ENCODE measurements at regions of chrX and their contacts with region 1.

Region 1: DNA sequence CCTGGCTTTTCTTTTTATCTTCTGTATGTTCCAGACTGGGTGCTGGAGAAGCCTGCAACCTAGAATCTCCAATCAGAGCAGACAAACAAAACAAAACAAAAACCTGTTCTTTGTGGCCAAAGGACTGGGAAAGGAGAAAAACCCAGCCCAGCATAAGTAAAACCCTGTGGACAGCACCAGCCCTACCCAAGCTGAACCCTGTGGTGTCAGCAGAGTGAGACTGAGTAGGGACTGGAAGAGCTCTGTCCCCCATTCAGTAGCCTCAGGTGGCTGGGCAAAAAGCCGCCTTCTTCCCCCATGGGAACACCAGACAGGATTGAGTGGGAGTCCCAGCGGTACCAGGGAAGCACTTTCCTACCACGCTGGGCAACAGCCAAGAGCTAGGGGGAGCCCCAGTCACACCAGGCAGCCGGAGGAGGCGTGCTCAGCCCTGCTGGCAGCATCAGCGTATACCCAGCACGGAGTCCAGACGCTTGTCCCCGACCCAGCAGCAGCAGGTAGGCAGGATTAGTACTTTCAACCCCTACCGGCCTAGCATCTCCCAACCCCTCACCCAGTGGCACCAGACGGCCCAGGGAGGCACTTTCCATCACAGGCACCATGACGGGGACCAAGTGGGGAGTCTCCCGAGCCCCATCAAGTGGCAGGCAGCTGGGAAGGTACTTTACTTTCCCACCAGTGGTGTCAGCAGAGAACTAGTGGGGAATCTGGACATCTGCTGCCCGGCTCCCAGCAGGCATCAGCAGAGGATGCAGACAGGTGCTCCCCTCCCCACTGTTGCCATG is 8.6 kb upstream of the JADE3 start:
- DNase-seq: peak; percentile 37
- H3K4me3 Mint-ChIP-seq: peak overlapping the region; percentile 56
- H3K27ac Mint-ChIP-seq: no peak overlapping the region
- H3K4me1 Mint-ChIP-seq: peaks cover 2% of the 10 kb centered on the region
- H3K27me3 Mint-ChIP-seq: peaks cover 21% of the 10 kb centered on the region

Region 2: DNA sequence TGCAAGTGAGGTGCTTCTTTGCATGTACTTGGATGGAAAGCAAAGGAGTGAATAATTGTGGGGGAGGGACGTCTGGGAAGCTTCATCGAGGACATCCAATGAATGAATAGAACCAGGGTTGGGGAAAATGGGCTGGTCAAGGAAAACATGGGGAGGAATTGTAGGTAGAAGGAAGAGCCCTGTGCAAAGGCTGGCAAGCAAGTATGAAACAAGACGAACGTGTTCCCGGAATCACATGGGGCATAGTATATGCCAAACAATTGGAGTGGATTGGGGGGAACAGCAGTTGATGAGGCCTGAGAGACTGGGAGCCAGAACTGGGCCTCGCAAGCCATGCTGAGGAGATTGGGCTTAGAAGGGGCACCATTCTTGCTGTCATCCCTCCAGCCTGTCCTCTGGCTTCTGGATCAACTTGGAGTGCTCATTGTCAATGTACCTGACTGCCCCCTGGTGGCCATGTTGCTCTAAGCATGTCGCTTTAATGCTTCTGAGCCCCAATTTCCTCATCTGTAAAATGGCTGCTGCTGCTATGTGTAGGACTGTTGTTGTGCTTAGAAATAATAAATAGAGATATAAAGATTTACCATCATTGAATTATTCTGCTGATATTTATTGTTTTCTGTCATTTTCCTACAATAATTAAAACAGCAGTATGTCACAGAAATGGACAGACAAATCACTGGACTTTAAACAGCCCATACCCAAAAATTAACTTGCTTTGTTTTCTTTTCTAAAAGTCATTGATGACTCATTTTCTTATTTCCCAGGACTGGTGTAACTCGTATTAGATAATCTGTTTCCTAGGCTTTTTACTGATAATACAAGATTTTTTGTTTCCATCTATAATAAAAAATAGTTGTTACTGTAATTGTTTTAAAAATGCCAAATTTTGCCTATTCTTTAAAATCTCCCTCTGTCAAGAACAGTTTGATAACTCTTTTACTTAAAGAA is 75.0 kb after region 1 on chrX:
- intact Hi-C with region 1: loop called (anchors 2 kb)
- DNase-seq: peak; percentile 57
- H3K4me3 Mint-ChIP-seq: no peak overlapping the region
- H3K27ac Mint-ChIP-seq: no peak overlapping the region
- H3K4me1 Mint-ChIP-seq: no peaks in the 10 kb centered on the region
- H3K27me3 Mint-ChIP-seq: peaks cover 8% of the 10 kb centered on the region

Region 3: DNA sequence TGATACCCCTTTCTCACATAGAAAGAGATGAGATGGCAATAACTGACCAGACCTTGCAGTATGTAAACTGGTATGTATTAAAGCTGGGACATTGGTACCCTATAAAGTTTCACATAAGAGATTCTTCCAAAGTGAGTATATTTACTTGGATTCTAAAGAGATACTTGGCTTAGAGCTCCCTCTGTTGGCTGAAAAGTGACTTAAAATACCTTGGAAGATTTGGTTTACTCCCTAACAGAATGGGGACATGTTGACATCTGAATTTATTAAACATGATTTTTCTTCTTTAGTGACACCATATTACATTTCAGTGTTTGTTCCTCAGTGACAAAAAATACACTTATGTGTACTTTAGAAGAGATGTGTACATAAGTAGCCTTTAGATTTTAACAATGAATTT is 126.7 kb after region 1 on chrX:
- intact Hi-C with region 1: loop called (anchors 5 kb)
- DNase-seq: no peak
- H3K4me3 Mint-ChIP-seq: no peak overlapping the region
- H3K27ac Mint-ChIP-seq: no peak overlapping the region
- H3K4me1 Mint-ChIP-seq: no peaks in the 10 kb centered on the region
- H3K27me3 Mint-ChIP-seq: no peaks in the 10 kb centered on the region